Sigmoid colon (tissue), 7 donors: ENCODE measurements at regions of chr2 and their contacts with region 1.

Region 1: DNA sequence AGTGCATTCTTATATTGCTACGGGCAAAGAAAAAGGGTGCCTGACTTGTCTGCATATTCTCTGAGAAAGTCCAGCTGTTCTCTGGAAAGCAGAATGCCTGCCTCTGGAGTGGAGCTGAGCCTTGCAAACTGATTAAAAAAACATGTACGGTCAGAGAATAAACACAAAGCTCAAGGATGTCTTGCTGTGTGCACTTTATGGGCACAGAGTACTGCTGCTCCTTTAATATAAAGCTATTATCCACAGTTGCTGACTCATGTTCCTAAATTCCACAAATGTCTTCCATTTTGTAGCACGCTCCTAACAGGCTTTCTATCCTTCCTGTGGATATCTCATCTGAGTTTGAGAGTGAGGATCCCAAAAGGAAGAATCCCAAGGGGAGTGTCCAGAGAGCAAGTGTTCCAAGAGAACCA is 229.0 kb downstream of the MREG start:
- DNase-seq: peak; percentile 79
- H3K4me3 ChIP-seq: no peak overlapping the region
- H3K27ac ChIP-seq: peak overlapping the region; percentile 58 to 85 (median 78)
- H3K4me1 ChIP-seq: peaks cover 0 to 59% (median 31%) of the 10 kb centered on the region in 4 donors
- H3K27me3 ChIP-seq: no peaks in the 10 kb centered on the region
- CTCF ChIP-seq: no peak
- EP300 ChIP-seq: peak in 3 of 4 donors; percentile 62 to 86 (median 67)
- POLR2A ChIP-seq: no peak

Region 2: GRCh38 chr2:215664847-215665525 is 119.4 kb before region 1 on chr2:
- intact Hi-C with region 1: loop called (anchors 5 kb)
- DNase-seq: no peak
- H3K4me3 ChIP-seq: no peak overlapping the region
- H3K27ac ChIP-seq: peak overlapping the region; percentile 45 to 80 (median 68)
- H3K4me1 ChIP-seq: peaks cover 0 to 71% (median 43%) of the 10 kb centered on the region in 4 donors
- H3K27me3 ChIP-seq: no peaks in the 10 kb centered on the region
- CTCF ChIP-seq: no peak
- EP300 ChIP-seq: no peak
- POLR2A ChIP-seq: no peak

Region 3: DNA sequence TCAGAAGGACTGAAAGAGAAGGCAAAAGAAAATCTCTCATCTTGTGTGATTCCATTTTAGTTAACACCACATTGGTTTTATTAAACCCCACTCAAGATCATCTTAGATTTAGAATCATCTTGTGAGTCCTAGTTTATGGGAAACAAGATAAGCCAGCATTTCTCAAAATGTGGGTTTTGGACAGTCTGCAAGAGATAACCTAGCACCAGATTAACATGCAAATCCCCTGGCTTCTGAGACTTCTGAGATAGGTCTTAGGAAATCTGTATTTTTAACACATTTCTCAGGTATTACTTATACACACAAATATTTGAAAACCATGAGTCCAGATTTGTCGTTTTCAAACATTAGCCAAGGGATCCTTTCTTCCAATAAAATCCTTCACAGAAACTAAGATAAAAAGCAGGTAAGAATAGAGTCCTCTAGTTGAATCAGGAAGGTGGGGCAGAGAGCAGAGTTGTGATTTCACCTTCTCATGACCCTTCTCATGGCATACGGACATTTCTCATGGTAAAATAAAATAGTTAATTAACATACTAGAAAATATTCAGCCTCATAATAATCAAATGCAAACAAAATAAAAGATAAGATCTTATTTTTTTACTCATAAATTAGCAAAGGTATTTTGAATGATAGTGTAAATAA is 61.3 kb before region 1 on chr2:
- intact Hi-C with region 1: loop called (anchors 2 kb)
- DNase-seq: no peak
- H3K4me3 ChIP-seq: no peak overlapping the region
- H3K27ac ChIP-seq: peak overlapping the region; percentile 71 to 85 (median 75)
- H3K4me1 ChIP-seq: peaks cover 0 to 36% (median 30%) of the 10 kb centered on the region in 4 donors
- H3K27me3 ChIP-seq: no peaks in the 10 kb centered on the region
- CTCF ChIP-seq: no peak
- EP300 ChIP-seq: no peak
- POLR2A ChIP-seq: no peak

Region 4: DNA sequence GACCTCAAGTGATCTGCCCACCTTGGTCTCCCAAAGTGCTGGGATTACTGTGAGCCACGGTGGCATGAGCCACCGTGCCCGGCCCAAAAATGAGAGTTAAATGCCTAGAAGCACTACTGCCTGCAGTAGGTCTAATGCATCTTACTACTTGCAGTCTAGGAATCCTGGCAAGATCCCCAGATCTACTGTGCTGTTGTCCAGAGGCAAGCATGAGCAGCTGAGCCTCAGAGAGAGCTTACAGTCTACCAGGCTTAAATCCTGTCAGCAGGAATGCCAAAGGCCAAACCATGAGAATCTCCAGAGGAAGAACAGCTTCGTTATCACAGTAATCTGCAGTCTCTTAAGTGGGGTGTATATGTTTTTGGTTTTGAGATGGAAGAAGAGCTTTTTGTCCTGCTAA is 379.1 kb after region 1 on chr2:
- intact Hi-C with region 1: no loop called
- DNase-seq: no peak
- H3K4me3 ChIP-seq: no peak overlapping the region
- H3K27ac ChIP-seq: peak overlapping the region in 2 of 4 donors; percentile 26 to 32
- H3K4me1 ChIP-seq: peaks cover 0 to 17% (median 7%) of the 10 kb centered on the region in 4 donors
- H3K27me3 ChIP-seq: no peaks in the 10 kb centered on the region
- CTCF ChIP-seq: no peak
- EP300 ChIP-seq: no peak
- POLR2A ChIP-seq: no peak